ENCODE measurements at regions of chr21 and their contacts with region 1.

Region 1: DNA sequence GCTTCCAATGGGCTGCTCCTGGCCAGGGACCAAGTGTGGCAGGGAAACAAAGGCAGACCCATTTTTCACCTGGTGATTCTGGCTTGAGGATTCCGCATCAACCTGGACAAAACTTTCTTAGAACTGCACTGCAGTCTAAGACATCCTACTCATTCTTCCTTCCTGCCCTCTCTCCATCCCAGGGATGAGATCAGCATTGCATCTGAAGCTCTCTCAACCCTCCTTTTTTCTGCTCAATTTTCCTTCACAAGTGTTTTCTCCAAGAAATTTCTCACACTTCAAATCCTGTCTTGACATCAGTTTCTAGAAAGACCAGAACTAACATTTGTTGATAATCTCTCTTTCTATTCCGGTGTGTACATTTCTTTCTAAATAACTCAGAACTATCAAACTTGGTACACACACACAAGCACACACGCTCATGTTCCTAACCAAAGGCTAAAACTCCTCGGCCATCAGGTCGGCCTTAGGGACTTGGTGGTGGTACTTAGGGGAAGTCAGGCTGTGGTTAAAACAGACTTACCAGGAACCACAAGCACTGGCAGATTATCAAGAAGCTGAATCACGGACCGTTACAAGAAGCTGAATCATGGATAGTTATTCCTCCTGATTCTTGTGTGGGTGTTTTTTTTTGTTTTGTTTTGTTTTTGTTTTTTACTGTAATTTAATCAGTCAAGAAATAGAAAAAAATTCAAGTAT is 21.0 kb upstream of the CXADR start:
- DNase-seq: no peak
- H3K4me3 Mint-ChIP-seq: no peak overlapping the region
- H3K27ac Mint-ChIP-seq: peak overlapping the region; percentile 64
- H3K4me1 Mint-ChIP-seq: peaks cover 32% of the 10 kb centered on the region
- H3K27me3 Mint-ChIP-seq: peaks cover 12% of the 10 kb centered on the region

Region 2: GRCh38 chr21:17334484-17334883 is 157.4 kb before region 1 on chr21:
- intact Hi-C with region 1: no loop called
- DNase-seq: no peak
- H3K4me3 Mint-ChIP-seq: no peak overlapping the region
- H3K27ac Mint-ChIP-seq: no peak overlapping the region
- H3K4me1 Mint-ChIP-seq: no peaks in the 10 kb centered on the region
- H3K27me3 Mint-ChIP-seq: no peaks in the 10 kb centered on the region

Region 3: DNA sequence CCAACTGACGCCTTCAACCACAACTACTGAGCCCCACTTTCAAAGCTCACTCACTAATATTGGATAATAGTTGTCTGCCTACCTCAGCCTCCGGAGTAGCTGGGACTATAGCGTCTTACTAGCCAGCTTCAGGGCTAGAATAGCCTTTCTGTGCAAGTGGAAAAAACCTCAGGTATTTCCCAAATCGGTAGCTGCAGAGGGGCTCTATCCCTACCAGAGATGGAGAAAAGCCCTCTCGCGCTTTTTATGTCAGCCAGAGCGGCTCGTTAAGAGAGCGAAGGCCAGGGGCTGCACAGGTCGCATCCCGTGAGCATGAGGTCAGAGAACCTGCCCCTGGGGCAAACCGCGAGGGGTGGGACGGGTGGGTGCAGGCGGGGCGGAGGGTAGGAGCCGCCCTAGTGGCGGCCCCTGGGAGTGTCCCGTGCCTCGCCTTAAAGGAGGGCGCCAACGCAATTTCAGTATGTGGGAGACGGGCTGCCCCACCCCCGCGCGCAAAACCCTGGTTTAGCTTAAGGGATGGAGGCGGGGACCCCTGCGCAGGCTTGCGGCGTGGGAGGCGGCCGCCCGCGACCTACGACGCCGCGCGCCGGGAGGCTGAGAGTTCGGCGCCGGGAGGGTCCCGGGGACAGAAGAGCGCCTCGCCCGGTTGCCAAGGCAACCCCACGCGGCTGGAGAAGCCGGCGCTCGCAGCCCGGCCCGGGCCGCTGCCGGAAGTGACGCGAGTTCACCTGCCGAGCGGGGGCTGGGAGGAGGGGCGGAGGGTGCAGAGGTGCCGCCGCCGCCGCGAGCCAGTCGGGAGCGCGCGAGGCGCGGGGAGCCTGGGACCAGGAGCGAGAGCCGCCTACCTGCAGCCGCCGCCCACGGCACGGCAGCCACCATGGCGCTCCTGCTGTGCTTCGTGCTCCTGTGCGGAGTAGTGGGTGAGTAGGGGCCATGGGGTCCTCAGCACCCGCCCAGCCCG is 20.7 kb after region 1 on chr21 and contains the start of gene CXADR:
- intact Hi-C with region 1: loop called (anchors 1 kb)
- DNase-seq: peak; percentile 72
- H3K4me3 Mint-ChIP-seq: peak within 1 kb of the TSS; percentile 83
- H3K27ac Mint-ChIP-seq: no peak within 1 kb of the TSS
- H3K4me1 Mint-ChIP-seq: peaks cover 15% of the 10 kb centered on the region
- H3K27me3 Mint-ChIP-seq: peaks cover 52% of the 10 kb centered on the region
- total RNA-seq, gene CXADR: 0.39 and 0.64 TPM in 2 replicates